Naive thymus-derived CD4-positive, alpha-beta T cell (primary cell): ENCODE measurements at regions of chr13 and their contacts with region 1.

Region 1: GRCh38 chr13:96817336-96817941 is 176.8 kb downstream of the OXGR1 start:
- DNase-seq: no peak
- ATAC-seq: no peak
- H3K4me3 ChIP-seq: no peak overlapping the region
- H3K4me3 Mint-ChIP-seq: no peak overlapping the region
- H3K27ac ChIP-seq: no peak overlapping the region
- H3K27ac Mint-ChIP-seq: no peak overlapping the region
- H3K4me1 ChIP-seq: no peaks in the 10 kb centered on the region
- H3K4me1 Mint-ChIP-seq: peaks cover 0 to 4% (median 0%) of the 10 kb centered on the region in 7 donors
- H3K27me3 ChIP-seq: no peaks in the 10 kb centered on the region
- H3K27me3 Mint-ChIP-seq: no peaks in the 10 kb centered on the region

Region 2: DNA sequence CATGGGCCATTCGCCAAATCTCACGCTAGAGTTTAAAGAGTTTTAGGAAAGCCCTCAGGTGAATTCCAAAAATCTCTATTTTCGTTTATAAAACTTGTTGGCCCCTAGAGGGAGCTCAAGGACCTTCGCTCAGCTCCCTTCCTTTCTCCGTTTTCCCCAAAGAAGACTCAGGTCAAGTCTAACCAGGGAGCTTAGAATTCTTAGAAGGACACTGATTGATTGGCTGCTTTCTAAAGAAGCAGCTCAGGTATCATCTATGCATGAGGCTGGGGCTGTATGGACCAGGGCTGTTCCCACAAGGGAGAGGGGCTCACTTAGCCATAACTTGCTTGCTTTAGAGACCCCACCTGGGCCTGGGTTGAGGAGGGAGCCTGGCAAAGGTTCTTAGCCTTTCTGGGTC is 1193.4 kb before region 1 on chr13:
- CTCF ChIA-PET with region 1: no interaction called
- POLR2A ChIA-PET with region 1: no interaction called
- intact Hi-C with region 1: loop called in 1 of 2 experiments (anchors 10 kb)
- DNase-seq: peak in 5 of 9 donors; percentile 18 to 42 (median 29)
- ATAC-seq: peak; percentile 56
- H3K4me3 ChIP-seq: no peak overlapping the region
- H3K4me3 Mint-ChIP-seq: no peak overlapping the region
- H3K27ac ChIP-seq: no peak overlapping the region
- H3K27ac Mint-ChIP-seq: no peak overlapping the region
- H3K4me1 ChIP-seq: no peaks in the 10 kb centered on the region
- H3K4me1 Mint-ChIP-seq: peaks cover 0 to 3% (median 0%) of the 10 kb centered on the region in 7 donors
- H3K27me3 ChIP-seq: no peaks in the 10 kb centered on the region
- H3K27me3 Mint-ChIP-seq: peaks cover 15 to 32% (median 20%) of the 10 kb centered on the region in 5 donors

Region 3: DNA sequence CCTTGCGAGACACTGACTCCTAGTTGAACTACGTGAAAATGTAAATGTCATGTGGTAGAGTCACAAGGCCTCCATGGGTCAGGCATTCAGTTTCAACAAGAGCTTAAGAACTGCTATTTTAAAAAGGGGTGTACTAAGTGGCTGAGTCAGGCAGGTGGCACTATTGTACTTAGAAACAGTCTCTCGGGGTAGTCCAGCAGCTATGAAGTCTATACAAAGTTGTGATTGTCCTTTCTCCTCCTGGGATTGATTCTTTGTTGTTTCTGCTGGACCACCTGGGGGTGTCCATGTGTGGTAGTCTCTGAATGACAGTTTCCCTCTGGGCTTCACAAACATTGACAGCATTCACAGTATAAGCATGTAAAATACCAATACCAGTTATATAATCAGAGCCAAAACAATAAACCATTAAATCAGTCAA is 797.3 kb before region 1 on chr13:
- CTCF ChIA-PET with region 1: no interaction called
- POLR2A ChIA-PET with region 1: no interaction called
- intact Hi-C with region 1: loop called in 1 of 2 experiments (anchors 2 kb)
- DNase-seq: no peak
- ATAC-seq: peak; percentile 32
- H3K4me3 ChIP-seq: no peak overlapping the region
- H3K4me3 Mint-ChIP-seq: no peak overlapping the region
- H3K27ac ChIP-seq: no peak overlapping the region
- H3K27ac Mint-ChIP-seq: no peak overlapping the region
- H3K4me1 ChIP-seq: no peaks in the 10 kb centered on the region
- H3K4me1 Mint-ChIP-seq: no peaks in the 10 kb centered on the region
- H3K27me3 ChIP-seq: no peaks in the 10 kb centered on the region
- H3K27me3 Mint-ChIP-seq: no peaks in the 10 kb centered on the region

Region 4: DNA sequence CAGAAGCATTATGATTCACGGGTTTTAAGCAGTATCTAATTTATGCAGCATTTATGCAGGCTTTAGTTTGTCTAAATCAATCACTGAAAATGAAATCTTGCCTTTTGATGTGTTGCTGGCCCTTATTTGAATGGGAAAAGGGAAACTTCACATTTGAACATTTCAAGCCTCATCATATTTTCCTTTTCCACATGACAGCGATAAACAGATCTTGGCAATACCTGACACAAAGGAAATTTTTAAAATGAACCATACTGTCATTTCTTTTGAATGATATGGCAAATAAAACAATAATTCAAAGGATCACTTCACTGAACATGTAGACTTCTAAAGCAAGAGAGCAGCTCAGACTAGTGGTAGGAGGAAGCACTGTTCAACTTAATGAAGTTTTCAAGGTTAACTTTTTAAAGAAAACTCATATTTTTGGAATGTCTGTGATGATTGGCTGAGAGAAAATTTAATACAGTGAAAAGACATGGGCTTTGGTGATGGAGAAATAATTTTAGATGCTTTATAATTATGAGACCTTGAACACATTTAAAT is 21.3 kb before region 1 on chr13:
- CTCF ChIA-PET with region 1: no interaction called
- POLR2A ChIA-PET with region 1: no interaction called
- intact Hi-C with region 1: no loop called
- DNase-seq: no peak
- ATAC-seq: no peak
- H3K4me3 ChIP-seq: no peak overlapping the region
- H3K4me3 Mint-ChIP-seq: no peak overlapping the region
- H3K27ac ChIP-seq: no peak overlapping the region
- H3K27ac Mint-ChIP-seq: no peak overlapping the region
- H3K4me1 ChIP-seq: no peaks in the 10 kb centered on the region
- H3K4me1 Mint-ChIP-seq: no peaks in the 10 kb centered on the region
- H3K27me3 ChIP-seq: no peaks in the 10 kb centered on the region
- H3K27me3 Mint-ChIP-seq: no peaks in the 10 kb centered on the region